Posterior vena cava (tissue), 2 donors: ENCODE measurements at regions of chr17 and their contacts with region 1.

Region 1: GRCh38 chr17:63478791-63479494 is 2.1 kb downstream of the ACE start:
- DNase-seq: peak; percentile 94

Region 2: DNA sequence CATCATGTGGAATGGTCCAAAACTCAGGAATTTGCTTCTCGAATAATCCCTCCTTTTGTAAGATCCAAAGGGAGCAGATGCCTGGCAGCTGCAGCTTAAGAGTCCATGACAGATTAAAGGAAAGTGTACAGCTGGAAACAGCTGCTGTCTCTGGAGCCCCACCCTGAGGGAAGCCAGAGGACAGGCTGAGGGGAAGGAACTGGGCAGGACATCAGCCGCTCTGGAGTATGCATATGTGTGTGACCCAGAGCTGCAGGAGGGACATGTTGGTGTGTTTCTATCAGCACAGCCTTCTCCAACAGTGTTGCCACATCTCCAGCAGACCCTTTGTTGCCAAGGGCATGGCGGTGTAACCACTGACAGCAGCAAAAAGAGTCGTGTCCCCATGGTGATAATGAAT is 79.1 kb before region 1 on chr17:
- intact Hi-C with region 1: no loop called
- DNase-seq: peak; percentile 88

Region 3: DNA sequence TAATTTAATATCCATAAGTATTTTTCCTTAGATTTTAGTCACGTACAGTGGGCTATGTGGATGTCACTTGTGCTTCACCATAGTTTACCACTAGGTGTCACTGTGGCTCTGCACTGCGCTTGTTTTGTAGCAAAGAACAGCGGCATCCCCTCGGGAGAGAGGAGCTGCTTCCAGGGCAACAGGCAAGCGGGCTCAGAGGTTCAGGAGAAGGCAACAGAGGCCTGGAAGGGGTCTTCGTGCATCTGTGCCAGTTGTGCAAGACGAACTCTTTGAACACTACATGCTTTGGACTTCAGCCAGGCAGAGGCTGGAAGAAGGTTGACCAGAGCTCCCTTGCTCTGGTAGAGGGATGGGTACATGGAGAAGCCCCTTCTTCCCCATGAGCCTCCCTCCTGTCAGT is 53.5 kb before region 1 on chr17:
- intact Hi-C with region 1: loop called (anchors 2 to 5 kb)
- DNase-seq: peak; percentile 91

Region 4: GRCh38 chr17:63434876-63435684 is 43.9 kb before region 1 on chr17:
- intact Hi-C with region 1: loop called in 1 of 2 experiments (anchors 1 kb)
- DNase-seq: peak; percentile 88

Region 5: DNA sequence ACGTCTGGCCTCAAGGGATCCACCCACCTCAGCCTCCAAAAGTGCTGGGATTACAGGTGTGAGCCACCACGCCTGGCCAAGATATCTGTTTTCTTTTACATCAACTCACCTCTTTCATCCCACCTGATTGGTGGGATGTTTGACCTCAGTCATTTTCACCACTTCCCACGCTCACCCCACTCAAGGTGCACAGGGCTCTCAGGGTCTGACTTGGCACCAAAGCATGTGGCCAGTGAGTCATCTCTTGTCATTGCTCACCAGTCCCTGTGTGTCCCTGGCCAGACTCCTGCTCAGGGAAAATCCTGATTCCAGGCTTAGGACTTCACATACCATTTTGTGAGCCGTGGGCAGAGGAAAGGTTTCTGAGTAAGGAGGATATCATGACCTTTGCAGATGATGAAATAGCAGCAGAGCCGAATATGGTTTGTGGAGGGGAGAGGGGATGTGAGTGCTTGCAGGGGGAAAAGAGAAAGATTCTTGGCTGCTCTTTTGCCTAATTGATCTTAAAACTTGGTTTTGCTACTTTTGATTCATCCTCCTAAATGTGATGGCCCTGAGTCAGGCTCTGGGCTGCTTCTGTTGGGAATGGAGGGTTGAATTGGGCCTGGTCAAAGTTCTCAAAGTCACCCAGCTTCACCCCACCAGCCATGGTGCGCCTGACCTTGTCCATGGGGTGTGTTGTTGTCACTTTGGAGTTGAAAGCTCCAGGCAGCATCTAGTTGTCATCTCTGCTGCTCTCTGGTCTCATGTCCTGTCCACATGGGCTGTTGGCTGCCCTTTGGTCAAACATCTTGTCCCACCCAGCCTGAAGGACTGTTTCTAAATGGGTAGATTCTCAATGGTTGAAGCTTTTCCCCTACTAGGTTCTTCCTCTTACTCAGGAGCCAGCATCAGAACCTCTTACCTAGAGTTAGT is 38.2 kb after region 1 on chr17:
- intact Hi-C with region 1: no loop called
- DNase-seq: no peak

Region 6: DNA sequence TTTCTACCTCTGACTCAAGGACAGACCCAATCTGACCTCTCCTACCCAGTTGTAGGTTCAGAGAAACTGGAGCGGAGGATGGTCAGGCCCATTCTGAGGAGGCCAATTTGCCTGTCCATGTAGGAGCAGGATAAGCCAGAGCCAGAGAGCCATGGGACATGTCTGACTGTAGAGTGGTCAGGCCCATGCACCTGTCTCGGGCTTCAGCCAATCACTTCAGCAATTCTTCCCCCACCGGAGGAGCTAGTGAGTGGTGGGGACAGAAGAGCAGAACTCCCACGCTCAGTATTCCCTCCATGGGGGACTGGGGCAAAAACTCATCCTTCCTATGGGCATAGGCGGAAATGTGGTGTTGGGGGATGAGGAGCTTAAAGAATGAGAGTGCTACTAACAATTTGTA is 85.6 kb after region 1 on chr17:
- intact Hi-C with region 1: no loop called
- DNase-seq: no peak